Esophagus muscularis mucosa (tissue), 4 donors: ENCODE measurements at regions of chr6 and their contacts with region 1.

Region 1: GRCh38 chr6:134097114-134097707 is 44.8 kb upstream of the SLC2A12 start:
- DNase-seq: peak; percentile 88
- H3K4me3 ChIP-seq: no peak overlapping the region
- H3K27ac ChIP-seq: no peak overlapping the region
- H3K4me1 ChIP-seq: no peaks in the 10 kb centered on the region
- H3K27me3 ChIP-seq: no peaks in the 10 kb centered on the region
- CTCF ChIP-seq: peak; percentile 61 to 69 (median 64)
- EP300 ChIP-seq: no peak
- POLR2A ChIP-seq: no peak

Region 2: DNA sequence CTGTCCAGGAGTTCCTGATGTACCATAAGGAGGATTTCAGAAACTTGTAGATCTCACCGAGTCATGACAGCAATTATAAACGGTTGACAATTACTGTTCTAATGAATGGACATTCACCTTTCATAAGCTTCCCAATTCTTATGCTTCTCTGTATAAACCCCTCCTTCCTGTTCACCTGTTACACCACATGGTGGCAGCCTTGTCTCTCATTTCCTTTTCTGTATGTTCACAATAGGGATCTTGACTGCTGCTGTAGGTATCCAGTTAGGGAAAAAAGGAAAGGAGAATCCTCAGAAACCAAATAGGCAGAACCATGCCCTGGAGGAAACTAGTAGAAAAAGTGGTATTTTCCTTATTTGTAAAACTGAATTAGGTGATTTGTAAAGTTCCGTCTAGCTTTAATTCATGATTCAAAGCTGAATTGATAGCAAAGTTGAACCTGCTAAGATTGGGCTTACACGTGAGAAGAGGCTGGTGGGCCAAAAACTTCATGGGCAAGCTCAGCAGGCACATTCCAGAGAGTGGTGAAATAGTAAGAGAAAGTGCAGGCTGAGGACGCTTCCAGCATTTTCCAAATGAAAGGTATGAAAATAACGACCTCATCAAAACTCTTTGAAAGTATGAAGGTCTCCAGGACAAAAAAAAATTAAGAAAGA is 173.1 kb before region 1 on chr6:
- intact Hi-C with region 1: loop called (anchors 1 kb)
- DNase-seq: no peak
- H3K4me3 ChIP-seq: no peak overlapping the region
- H3K27ac ChIP-seq: no peak overlapping the region
- H3K4me1 ChIP-seq: peaks cover 0 to 4% (median 1%) of the 10 kb centered on the region in 4 donors
- H3K27me3 ChIP-seq: no peaks in the 10 kb centered on the region
- CTCF ChIP-seq: peak; percentile 89
- EP300 ChIP-seq: no peak
- POLR2A ChIP-seq: no peak

Region 3: DNA sequence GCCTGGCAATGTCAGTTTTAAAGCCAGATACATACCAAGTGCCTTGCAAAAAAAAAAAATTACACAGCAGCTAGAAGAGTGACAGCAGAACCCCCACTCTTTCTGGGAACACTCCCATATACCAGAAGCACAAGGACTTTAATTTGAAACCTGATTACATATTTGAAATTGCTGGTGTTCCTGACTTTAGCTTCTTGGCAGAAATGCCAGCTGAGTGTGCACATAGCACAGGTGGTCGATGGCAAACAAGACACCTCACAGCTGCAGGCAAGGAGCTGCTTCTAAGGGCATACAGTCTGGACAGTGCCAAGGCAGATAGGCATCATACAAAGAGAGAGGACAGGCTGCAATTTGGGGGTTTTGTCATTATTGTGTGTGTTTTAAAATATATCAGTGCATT is 371.4 kb after region 1 on chr6:
- intact Hi-C with region 1: no loop called
- DNase-seq: no peak
- H3K4me3 ChIP-seq: no peak overlapping the region
- H3K27ac ChIP-seq: no peak overlapping the region
- H3K4me1 ChIP-seq: peaks cover 0 to 14% (median 2%) of the 10 kb centered on the region in 4 donors
- H3K27me3 ChIP-seq: no peaks in the 10 kb centered on the region
- CTCF ChIP-seq: no peak
- EP300 ChIP-seq: no peak
- POLR2A ChIP-seq: no peak